Activated B cell treated with CpG ODN at 0.5 μM for 24 hours (primary cell): ENCODE measurements at regions of chr19 and their contacts with region 1.

Region 1: DNA sequence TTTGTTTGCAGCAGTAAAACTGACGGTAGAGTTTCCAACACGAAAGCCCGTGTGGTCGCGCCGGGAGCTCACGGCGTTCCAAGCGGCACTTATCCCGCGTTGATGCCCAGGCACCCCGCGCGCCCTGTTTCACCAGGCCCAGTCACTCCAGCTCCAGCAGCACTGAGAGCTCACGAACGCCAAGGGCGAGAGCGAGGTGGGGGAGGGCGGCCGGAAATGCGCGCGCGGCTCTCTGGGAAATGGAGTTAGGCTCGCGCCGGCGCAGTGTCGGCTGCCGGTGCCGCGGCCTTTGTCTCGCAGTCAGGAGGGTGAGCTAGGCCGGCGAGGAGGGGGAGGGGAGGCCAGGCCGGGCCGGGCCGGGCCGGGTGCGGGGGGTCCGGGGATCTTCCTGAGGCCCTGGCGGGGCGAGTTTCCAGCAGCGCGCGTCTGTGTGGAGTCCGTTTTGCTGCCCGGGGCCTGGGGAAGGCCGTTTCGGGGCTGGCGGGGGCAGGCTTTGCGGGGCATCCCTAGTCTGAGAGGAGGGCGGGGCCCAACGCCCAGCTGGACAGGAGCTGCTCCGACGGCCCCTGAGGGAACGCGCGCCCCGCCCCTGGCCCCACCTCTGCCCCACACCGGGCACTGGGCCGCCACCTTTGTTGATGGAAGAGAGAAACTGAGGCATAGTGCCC is at the start of gene ZNF135:
- DNase-seq: peak; percentile 78
- ATAC-seq: peak; percentile 93
- H3K4me3 Mint-ChIP-seq: peak within 1 kb of the TSS; percentile 85
- H3K27ac Mint-ChIP-seq: peak within 1 kb of the TSS; percentile 87
- H3K4me1 Mint-ChIP-seq: peaks cover 9% of the 10 kb centered on the region
- H3K27me3 Mint-ChIP-seq: peaks cover 13% of the 10 kb centered on the region
- CTCF ChIP-seq: no peak
- total RNA-seq, gene ZNF135: 5.8 and 7.5 TPM in 2 replicates

Region 2: DNA sequence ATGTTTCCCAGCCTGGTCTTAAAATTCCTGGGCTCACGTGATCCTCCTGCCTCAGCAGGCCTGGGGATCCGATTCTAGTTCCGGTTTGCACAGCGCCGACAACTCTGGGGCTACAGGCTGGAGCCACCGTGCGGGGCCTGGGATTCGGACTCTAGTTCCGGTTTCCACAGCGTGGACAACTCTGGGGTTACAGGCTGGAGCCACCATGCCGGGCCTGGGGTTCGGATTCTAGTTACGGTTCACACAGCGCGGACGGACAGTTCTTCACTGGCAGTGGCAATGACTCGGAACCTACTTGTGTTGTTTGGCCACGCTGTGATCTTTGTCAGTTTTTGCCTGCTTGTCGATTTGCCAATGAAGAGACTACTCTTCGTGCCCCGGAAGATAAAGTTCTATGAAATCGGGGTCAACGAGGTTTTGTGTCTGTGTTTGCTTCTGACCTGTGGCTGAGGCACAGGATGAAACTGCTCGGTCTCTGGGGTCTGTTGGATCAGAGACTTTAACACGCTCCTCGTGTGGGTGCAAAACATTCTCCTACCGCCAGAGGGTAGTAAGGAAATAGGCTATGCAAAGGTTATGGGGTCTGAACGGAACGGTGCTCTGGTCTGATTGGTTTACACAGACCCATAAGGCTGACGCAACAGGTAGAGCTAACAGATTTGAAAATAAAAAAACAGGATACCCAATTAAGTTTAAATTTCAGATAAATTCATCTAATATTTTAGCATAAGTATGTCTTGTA is 37.4 kb before region 1 on chr19:
- CTCF ChIA-PET with region 1: no interaction called
- POLR2A ChIA-PET with region 1: no interaction called
- intact Hi-C with region 1: loop called (anchors 5 kb)
- DNase-seq: no peak
- ATAC-seq: peak; percentile 100
- H3K4me3 Mint-ChIP-seq: no peak overlapping the region
- H3K27ac Mint-ChIP-seq: no peak overlapping the region
- H3K4me1 Mint-ChIP-seq: no peaks in the 10 kb centered on the region
- H3K27me3 Mint-ChIP-seq: peaks cover 4% of the 10 kb centered on the region
- CTCF ChIP-seq: no peak

Region 3: GRCh38 chr19:58097781-58098681 is 38.9 kb after region 1 on chr19 and contains the start of gene ZSCAN18:
- CTCF ChIA-PET with region 1: no interaction called
- POLR2A ChIA-PET with region 1: no interaction called
- intact Hi-C with region 1: loop called (anchors 2 kb)
- DNase-seq: peak; percentile 98
- ATAC-seq: peak; percentile 93
- H3K4me3 Mint-ChIP-seq: peak within 1 kb of the TSS; percentile 90
- H3K27ac Mint-ChIP-seq: peak within 1 kb of the TSS; percentile 100
- H3K4me1 Mint-ChIP-seq: peaks cover 18% of the 10 kb centered on the region
- H3K27me3 Mint-ChIP-seq: no peaks in the 10 kb centered on the region
- CTCF ChIP-seq: no peak
- total RNA-seq, gene ZSCAN18: 40.8 and 49.8 TPM in 2 replicates